GM10248 (cell line): ENCODE measurements at regions of chr2 and their contacts with region 1.

Region 1: GRCh38 chr2:72887754-72888437 is 688 bp downstream of the SPR start:
- DNase-seq: peak; percentile 68
- CTCF ChIP-seq: peak; percentile 86

Region 2: DNA sequence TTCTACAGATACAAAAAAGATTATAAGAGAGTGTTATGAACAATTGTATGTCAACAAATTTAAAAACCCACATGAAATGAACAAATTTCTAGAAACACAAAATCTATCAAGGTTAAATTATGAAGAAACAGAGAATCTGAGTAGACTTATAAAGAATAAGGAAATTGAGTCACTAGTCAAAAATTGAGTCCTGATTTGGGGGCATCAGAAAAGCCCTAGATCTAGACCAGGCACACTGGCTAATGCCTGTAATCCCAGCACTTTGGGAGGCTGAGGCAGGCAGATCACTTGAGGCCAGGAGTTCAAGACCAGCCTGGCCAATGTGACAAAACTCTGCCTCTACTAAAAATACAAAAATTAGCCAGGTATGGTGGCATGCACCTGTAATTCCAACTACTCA is 16.0 kb before region 1 on chr2:
- CTCF ChIA-PET with region 1: interaction called, 12 read pairs
- POLR2A ChIA-PET with region 1: no interaction called
- DNase-seq: no peak
- CTCF ChIP-seq: no peak

Region 3: GRCh38 chr2:72915907-72916742 is 28.2 kb after region 1 on chr2:
- CTCF ChIA-PET with region 1: interaction called, 13 read pairs
- POLR2A ChIA-PET with region 1: no interaction called
- DNase-seq: peak; percentile 80
- CTCF ChIP-seq: no peak

Region 4: GRCh38 chr2:72934683-72935610 is 47.1 kb after region 1 on chr2:
- CTCF ChIA-PET with region 1: interaction called, 85 read pairs
- POLR2A ChIA-PET with region 1: no interaction called
- DNase-seq: peak; percentile 67
- CTCF ChIP-seq: peak; percentile 37

Region 5: DNA sequence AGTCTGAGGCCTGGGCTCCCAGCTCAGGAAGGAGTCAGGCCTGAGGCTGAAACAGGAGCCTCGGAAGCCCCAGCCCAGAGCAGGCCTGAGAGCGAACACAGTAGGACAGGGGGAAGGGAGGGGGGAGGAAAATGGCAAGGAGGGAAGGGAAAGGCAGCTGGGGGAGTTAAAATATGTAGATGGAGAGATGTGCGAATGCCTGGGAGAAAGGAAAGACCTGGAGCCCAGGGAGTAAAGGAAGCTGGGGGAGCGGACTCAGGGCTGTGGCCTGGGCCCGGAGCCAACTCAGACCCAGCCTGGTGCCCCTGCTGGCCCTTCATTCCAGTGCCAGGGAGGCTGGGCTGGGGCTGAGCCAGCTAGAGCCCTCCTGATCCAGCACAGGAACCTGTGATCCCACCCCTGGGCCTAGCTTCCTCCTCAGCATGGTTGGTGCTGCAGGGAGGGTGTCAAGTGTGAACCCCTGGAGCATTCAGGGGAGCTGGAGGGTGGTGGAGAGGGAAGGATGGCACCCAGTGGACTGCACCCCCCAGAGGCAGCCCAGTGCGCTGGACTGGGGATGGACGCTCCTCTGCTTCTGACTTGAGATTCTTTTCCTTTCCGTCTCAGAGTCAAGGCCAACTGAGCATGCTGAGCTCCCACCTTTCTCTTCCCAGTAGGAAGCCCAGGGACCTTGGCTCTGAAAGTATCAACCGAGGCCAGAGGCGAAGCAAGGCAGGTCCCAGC is 75.7 kb after region 1 on chr2:
- CTCF ChIA-PET with region 1: interaction called, 150 read pairs
- POLR2A ChIA-PET with region 1: no interaction called
- DNase-seq: no peak
- CTCF ChIP-seq: no peak

Region 6: GRCh38 chr2:72993147-72993932 is 105.4 kb after region 1 on chr2:
- CTCF ChIA-PET with region 1: interaction called, 18 read pairs
- POLR2A ChIA-PET with region 1: no interaction called
- DNase-seq: peak; percentile 78
- CTCF ChIP-seq: peak; percentile 70

Region 7: GRCh38 chr2:73212448-73213176 is 324.7 kb after region 1 on chr2:
- CTCF ChIA-PET with region 1: interaction called, 14 read pairs
- POLR2A ChIA-PET with region 1: no interaction called
- DNase-seq: peak; percentile 85
- CTCF ChIP-seq: peak; percentile 94

Region 8: DNA sequence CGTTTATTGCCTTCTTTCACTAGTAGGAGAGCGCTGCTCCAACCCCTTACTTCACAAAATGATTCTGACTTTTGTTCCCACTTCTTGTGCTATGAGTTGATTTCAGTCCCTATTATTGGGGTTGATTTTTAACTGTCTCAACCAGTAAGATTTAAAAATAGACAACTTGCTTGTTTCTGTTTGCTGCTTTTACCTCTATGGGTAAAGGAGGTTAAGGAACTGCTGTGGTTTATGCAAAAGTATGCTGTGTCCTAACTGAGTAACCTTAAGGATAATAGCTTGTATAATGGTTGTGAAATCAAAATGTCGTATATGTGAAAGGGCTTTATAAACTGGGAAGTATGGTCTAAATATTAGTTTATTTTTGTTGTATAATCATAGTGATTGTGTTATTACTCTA is 520.3 kb after region 1 on chr2:
- CTCF ChIA-PET with region 1: no interaction called
- POLR2A ChIA-PET with region 1: no interaction called
- DNase-seq: peak; percentile 19
- CTCF ChIP-seq: no peak